Mammary epithelial cell (primary cell): ENCODE measurements at regions of chr9 and their contacts with region 1.

Region 1: DNA sequence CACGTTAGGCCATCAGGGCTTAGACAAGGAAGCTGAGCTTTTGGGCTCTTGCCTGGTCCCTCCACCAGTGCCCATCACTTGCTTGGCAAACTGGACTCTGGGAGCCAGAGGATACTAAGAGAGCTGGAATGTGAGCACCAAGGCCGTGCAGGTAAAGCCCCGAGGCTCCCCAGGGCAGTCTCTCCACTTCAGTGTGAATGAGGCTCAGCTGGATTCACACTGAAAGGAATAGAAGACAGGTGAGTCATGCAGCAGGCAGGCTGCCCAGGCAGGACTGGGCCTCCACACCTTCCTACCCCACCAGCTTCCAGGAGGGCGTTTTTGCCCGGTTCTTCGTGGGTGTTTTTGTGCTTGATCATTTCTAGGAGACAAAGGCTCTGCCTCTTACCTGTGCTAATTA is 7.3 kb upstream of the CTSV start:
- DNase-seq: peak; percentile 99
- H3K4me3 ChIP-seq: no peak overlapping the region
- H3K27ac ChIP-seq: peak overlapping the region; percentile 93
- H3K4me1 ChIP-seq: peaks cover 21% of the 10 kb centered on the region
- H3K27me3 ChIP-seq: no peaks in the 10 kb centered on the region
- CTCF ChIP-seq: no peak

Region 2: DNA sequence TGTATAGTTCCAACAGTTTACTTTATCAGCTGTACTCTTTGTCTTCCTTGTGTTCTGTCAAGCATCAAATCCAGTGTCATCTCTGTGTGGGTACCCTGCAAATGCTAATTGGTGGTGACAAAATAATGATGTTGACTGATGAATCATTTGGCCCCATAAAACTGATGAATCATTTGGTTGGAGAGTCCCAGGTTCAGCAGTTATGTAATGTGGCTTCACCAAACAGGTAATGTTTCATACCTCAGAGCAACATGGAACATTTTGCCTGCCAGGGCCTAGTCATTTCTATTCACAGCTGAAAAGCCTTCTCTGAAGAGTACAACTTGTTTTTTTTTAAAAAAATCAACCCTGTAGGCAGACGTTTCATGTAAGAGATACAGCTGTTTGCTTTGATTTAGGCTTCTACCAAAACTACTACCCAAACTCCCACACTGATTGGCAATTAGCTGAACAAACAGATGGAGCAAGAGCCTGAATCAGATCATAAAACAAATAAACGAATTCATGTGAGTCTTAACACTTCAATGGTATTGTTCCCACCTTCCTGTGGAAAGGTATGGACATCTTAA is 16.3 kb after region 1 on chr9:
- CTCF ChIA-PET with region 1: no interaction called
- dilution Hi-C with region 1: no loop called
- in situ Hi-C with region 1: no loop called
- intact Hi-C with region 1: loop called (anchors 1 kb)
- DNase-seq: peak; percentile 97
- H3K4me3 ChIP-seq: no peak overlapping the region
- H3K27ac ChIP-seq: peak overlapping the region; percentile 95
- H3K4me1 ChIP-seq: peaks cover 26% of the 10 kb centered on the region
- H3K27me3 ChIP-seq: no peaks in the 10 kb centered on the region
- CTCF ChIP-seq: no peak

Region 3: GRCh38 chr9:97237951-97238851 is 192.0 kb after region 1 on chr9:
- CTCF ChIA-PET with region 1: no interaction called
- dilution Hi-C with region 1: no loop called
- in situ Hi-C with region 1: no loop called
- intact Hi-C with region 1: no loop called
- DNase-seq: peak; percentile 75
- H3K4me3 ChIP-seq: peak overlapping the region; percentile 42 to 67 (median 51)
- H3K27ac ChIP-seq: no peak overlapping the region
- H3K4me1 ChIP-seq: peaks cover 3% of the 10 kb centered on the region
- H3K27me3 ChIP-seq: no peaks in the 10 kb centered on the region
- CTCF ChIP-seq: no peak